ENCODE measurements at regions of chr1 and their contacts with region 1.

Region 1: DNA sequence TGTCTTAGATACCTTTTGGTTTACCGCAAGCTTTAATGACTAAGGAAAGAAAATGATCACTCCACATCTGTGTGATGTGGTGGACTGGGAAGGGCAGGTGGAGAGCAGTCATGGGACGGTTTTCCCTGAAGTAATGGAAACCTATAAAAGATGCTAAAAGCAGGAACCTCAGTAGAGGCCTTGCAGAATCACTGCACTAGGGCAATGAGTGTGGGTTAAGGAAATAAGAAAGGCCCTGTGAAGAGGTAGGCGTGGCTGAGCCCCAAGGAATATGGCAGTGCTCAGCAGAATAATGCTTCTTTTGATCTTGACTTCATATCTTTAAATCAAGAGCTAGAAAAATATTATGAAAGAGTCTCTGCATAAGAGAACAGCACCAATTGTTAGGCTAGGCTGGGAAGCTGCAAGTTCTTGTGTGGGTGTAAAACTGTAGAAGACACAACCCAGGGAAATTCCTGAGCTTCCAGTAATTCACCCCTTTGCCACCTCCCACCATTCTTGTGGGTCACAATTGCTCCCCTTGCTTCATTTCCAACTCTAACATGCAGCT is 49.9 kb downstream of the CLCA4 start:
- DNase-seq: no peak
- ATAC-seq: no peak
- H3K4me3 ChIP-seq: no peak overlapping the region
- H3K27ac ChIP-seq: no peak overlapping the region
- H3K4me1 ChIP-seq: no peaks in the 10 kb centered on the region
- H3K27me3 ChIP-seq: no peaks in the 10 kb centered on the region
- CTCF ChIP-seq: no peak
- POLR2A ChIP-seq: no peak
- RAD21 ChIP-seq: no peak

Region 2: DNA sequence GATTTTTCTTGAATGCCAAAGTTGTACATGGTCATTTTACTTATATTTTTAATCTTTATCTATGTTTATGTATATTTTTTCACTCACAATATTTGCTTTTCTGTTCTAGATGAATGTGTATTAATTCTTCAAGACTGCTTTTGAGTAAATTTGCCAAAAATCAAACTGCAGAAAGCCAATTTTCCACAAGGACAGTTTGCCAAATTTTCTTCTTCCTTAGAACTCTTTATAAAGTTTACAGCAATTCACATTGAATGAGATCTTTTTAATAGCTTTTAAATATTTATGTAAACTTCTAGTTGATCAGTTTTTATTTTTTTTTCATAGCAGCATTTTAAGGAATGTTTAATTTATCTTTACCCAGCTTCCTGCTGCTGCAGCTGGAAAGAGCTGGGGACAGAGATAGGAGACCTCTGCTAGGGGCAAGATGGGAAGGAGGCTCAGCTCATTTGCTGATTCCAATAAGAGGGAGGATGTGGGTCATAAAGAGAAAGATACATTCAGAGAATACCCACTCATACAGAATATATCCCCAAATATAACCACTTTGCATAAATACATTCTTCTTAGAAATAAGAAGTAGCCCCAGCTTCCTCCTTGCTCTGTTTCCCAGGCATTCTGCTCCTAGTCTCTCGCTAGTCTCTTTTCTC is 293.6 kb before region 1 on chr1:
- CTCF ChIA-PET with region 1: no interaction called
- POLR2A ChIA-PET with region 1: no interaction called
- dilution Hi-C with region 1: no loop called
- in situ Hi-C with region 1: no loop called
- intact Hi-C with region 1: no loop called
- DNase-seq: no peak
- ATAC-seq: no peak
- H3K4me3 ChIP-seq: no peak overlapping the region
- H3K27ac ChIP-seq: no peak overlapping the region
- H3K4me1 ChIP-seq: no peaks in the 10 kb centered on the region
- H3K27me3 ChIP-seq: no peaks in the 10 kb centered on the region; the same call in 1 of the 2 replicates
- CTCF ChIP-seq: no peak
- POLR2A ChIP-seq: no peak
- RAD21 ChIP-seq: no peak

Region 3: DNA sequence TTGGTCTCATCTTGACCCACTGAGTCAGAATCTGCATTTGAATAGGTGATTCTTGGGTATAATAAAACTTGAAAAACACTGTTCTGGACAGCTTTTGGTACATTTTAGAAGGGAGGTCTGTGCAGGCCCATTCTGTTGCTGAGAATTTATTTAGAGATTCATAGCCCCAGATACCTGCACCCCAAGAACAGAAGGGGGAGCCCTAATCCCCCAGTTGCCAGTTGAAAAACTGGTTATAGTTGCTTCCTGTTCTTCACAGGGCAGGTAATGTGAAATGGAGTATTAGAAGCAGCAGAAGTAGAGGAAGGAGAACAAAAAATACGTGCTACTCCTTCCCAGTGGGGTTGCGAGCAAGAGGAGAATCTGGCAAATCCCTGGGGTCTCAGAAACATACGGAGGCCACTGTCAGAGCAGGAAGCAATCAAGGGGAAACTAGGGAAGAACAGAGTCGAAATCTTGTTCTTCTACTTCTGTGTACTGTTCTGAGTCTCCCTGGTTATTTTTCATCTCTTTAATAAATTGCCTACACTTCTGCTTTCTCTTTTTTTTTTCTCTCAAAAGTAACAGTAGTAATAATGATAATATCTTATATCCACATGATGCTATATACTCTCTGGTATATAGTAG is 177.4 kb before region 1 on chr1:
- CTCF ChIA-PET with region 1: no interaction called
- POLR2A ChIA-PET with region 1: no interaction called
- dilution Hi-C with region 1: no loop called
- in situ Hi-C with region 1: no loop called
- intact Hi-C with region 1: no loop called
- DNase-seq: no peak
- ATAC-seq: no peak
- H3K4me3 ChIP-seq: no peak overlapping the region
- H3K27ac ChIP-seq: no peak overlapping the region
- H3K4me1 ChIP-seq: no peaks in the 10 kb centered on the region
- H3K27me3 ChIP-seq: peaks cover 4% of the 10 kb centered on the region; the same call in 1 of the 2 replicates
- CTCF ChIP-seq: peak; percentile 29; the same call in 1 of the 2 replicates
- POLR2A ChIP-seq: no peak
- RAD21 ChIP-seq: no peak

Region 4: DNA sequence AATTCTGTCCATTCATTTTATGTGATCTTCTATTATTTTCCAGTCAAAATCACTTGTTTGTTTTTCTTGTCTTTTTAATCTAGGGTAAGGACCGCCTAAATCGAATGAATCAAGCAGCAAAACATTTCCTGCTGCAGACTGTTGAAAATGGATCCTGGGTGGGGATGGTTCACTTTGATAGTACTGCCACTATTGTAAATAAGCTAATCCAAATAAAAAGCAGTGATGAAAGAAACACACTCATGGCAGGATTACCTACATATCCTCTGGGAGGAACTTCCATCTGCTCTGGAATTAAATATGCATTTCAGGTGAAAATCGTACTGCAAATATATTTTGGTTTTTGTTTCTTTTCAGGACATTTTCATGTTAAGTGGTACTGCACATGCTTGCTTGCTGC is 29.5 kb before region 1 on chr1:
- CTCF ChIA-PET with region 1: no interaction called
- POLR2A ChIA-PET with region 1: interaction called, 12 read pairs
- dilution Hi-C with region 1: no loop called
- in situ Hi-C with region 1: no loop called
- intact Hi-C with region 1: no loop called
- DNase-seq: no peak
- ATAC-seq: no peak
- H3K4me3 ChIP-seq: no peak overlapping the region
- H3K27ac ChIP-seq: no peak overlapping the region
- H3K4me1 ChIP-seq: no peaks in the 10 kb centered on the region
- H3K27me3 ChIP-seq: no peaks in the 10 kb centered on the region
- CTCF ChIP-seq: no peak
- POLR2A ChIP-seq: no peak
- RAD21 ChIP-seq: no peak

Measured in IMR-90 (cell line).